ENCODE measurements at regions of chr7 and their contacts with region 1.

Region 1: GRCh38 chr7:5117095-5117970 is 71.7 kb downstream of the RBAK start:
- DNase-seq: no peak
- ATAC-seq: no peak
- H3K4me3 ChIP-seq: no peak overlapping the region
- H3K4me3 Mint-ChIP-seq: no peak overlapping the region
- H3K27ac ChIP-seq: no peak overlapping the region
- H3K27ac Mint-ChIP-seq: no peak overlapping the region
- H3K4me1 ChIP-seq: no peaks in the 10 kb centered on the region
- H3K4me1 Mint-ChIP-seq: no peaks in the 10 kb centered on the region
- H3K27me3 ChIP-seq: no peaks in the 10 kb centered on the region
- H3K27me3 Mint-ChIP-seq: peaks cover 21% of the 10 kb centered on the region
- CTCF ChIP-seq: no peak

Region 2: DNA sequence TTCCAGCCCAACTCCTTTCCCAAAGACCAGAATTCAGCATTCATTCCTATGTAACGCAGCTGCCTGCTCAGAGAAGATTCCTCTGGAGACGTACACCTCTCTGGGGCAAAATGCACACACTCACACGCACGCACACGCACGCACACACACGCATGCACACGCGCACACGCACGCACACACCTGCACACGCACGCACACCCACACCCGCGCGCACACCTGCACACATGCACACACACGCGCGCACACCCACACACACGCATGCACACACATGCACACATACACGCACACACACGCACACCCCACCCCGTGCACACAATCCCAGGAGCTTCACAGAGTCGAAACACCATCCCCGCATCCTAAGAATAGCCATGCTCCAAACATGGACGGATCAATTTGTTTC is 171.4 kb before region 1 on chr7:
- CTCF ChIA-PET with region 1: no interaction called
- POLR2A ChIA-PET with region 1: interaction called, 10 read pairs
- intact Hi-C with region 1: no loop called
- DNase-seq: no peak
- ATAC-seq: no peak
- H3K4me3 ChIP-seq: no peak overlapping the region
- H3K4me3 Mint-ChIP-seq: no peak overlapping the region
- H3K27ac ChIP-seq: no peak overlapping the region
- H3K27ac Mint-ChIP-seq: no peak overlapping the region
- H3K4me1 ChIP-seq: no peaks in the 10 kb centered on the region
- H3K4me1 Mint-ChIP-seq: no peaks in the 10 kb centered on the region
- H3K27me3 ChIP-seq: peaks cover 0 to 12% (median 1%) of the 10 kb centered on the region in 4 experiments
- H3K27me3 Mint-ChIP-seq: peaks cover 17% of the 10 kb centered on the region
- CTCF ChIP-seq: no peak

Region 3: DNA sequence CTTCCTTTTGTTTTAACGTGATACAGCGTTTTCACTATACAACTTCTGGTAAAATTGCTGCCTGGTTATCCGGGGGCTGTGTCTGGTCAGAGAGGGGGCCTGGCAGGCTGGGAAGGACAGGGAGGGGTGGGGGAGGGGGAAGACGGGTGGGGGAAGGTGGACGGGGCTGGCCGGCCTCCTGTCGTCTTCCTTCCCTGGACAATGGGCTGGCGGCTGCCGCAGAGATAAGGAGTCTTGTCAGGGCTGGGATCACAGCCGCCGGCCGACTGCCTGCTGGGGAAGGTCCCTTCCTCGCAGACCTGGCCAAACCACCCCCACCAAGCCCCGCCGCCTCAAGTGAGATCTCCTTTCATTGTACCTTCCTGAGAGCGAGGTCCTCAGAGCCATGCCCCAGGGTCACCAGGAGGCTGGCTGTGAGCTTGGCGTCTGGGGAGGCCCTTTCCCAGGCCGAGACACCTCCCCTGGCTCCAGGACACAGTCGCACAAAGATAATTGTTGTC is 457.5 kb after region 1 on chr7:
- CTCF ChIA-PET with region 1: no interaction called
- POLR2A ChIA-PET with region 1: no interaction called
- intact Hi-C with region 1: no loop called
- DNase-seq: no peak
- ATAC-seq: no peak
- H3K4me3 ChIP-seq: no peak overlapping the region
- H3K4me3 Mint-ChIP-seq: no peak overlapping the region
- H3K27ac ChIP-seq: no peak overlapping the region
- H3K27ac Mint-ChIP-seq: no peak overlapping the region
- H3K4me1 ChIP-seq: peaks cover 5 to 15% of the 10 kb centered on the region in 2 donors
- H3K4me1 Mint-ChIP-seq: peaks cover 17% of the 10 kb centered on the region
- H3K27me3 ChIP-seq: peaks cover 0 to 24% (median 4%) of the 10 kb centered on the region in 4 experiments
- H3K27me3 Mint-ChIP-seq: peaks cover 12% of the 10 kb centered on the region
- CTCF ChIP-seq: no peak

Measured in B cell (primary cell).